Activated CD4-positive, alpha-beta memory T cell treated with anti-CD3 and anti-CD28 coated beads for 36 hours (primary cell): ENCODE measurements at regions of chr11 and their contacts with region 1.

Region 1: DNA sequence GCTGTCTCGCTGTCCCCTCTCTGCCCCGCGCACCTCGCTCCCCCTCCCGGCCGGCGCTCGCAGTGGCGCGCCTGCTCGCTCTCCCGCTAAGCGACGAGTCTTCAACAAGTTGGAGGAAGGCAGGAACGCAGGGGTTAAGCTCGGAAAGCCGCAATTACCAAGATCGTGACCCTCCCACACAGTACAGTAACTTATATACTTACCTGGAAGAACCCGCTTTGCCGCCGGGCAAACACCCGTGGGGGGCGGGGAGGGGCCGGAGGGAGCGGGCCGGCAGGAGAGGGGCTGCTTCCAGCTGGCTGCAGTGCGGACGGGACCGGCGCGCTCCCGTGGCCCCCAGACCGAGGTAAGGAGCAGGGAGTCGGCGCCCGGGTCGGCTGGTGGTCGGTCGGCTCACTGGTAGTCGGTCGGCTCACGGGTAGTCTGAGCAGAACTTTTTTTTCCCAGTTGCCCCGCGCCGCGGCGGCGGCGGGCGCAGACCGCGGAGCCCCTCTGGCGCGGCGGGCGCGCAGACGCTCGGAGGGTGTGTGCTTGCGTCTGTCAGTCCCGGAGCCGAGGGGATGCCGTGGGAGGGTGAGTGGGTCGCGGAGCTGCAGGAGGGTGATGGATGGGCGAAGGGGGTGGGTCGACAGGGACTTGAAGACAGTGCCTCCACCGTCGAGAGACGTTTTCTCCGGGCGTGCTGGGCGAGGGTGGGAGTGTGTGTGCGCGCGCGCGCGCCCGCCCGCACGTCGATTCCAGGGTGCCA is 101.2 kb upstream of the HSD17B12 start:
- DNase-seq: peak; percentile 71
- H3K4me3 Mint-ChIP-seq: peak overlapping the region; percentile 66
- H3K27ac Mint-ChIP-seq: no peak overlapping the region
- H3K4me1 Mint-ChIP-seq: peaks cover 43% of the 10 kb centered on the region
- H3K27me3 Mint-ChIP-seq: peaks cover 85% of the 10 kb centered on the region

Region 2: DNA sequence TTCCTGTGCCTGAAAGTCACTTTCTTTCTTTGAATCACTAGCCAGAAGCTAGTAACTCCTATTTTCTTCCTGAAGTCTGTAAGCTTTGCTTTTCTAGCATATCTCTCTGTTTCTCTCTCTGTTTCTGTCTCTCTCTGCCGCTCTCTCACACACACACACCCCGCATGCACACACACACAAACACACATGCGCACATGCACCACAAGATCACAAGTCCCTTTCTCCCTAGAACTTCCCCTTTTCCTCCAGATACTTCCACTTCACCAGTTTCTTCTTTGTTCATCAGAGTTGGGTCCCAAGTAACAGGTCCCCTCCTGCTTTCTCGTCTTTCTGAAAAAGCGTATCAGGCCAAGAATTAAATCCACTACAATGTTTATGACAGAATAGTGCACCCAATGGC is 47.3 kb before region 1 on chr11:
- CTCF ChIA-PET with region 1: no interaction called
- POLR2A ChIA-PET with region 1: no interaction called
- intact Hi-C with region 1: no loop called
- DNase-seq: no peak
- H3K4me3 Mint-ChIP-seq: no peak overlapping the region
- H3K27ac Mint-ChIP-seq: no peak overlapping the region
- H3K4me1 Mint-ChIP-seq: no peaks in the 10 kb centered on the region
- H3K27me3 Mint-ChIP-seq: peaks cover 10% of the 10 kb centered on the region

Region 3: GRCh38 chr11:43567396-43567975 is 11.9 kb before region 1 on chr11:
- CTCF ChIA-PET with region 1: interaction called, 28 read pairs
- POLR2A ChIA-PET with region 1: no interaction called
- intact Hi-C with region 1: no loop called
- DNase-seq: no peak
- H3K4me3 Mint-ChIP-seq: no peak overlapping the region
- H3K27ac Mint-ChIP-seq: no peak overlapping the region
- H3K4me1 Mint-ChIP-seq: no peaks in the 10 kb centered on the region
- H3K27me3 Mint-ChIP-seq: peaks cover 40% of the 10 kb centered on the region

Region 4: GRCh38 chr11:43643898-43644620 is 64.7 kb after region 1 on chr11:
- CTCF ChIA-PET with region 1: no interaction called
- POLR2A ChIA-PET with region 1: no interaction called
- intact Hi-C with region 1: loop called (anchors 2 kb)
- DNase-seq: peak; percentile 93
- H3K4me3 Mint-ChIP-seq: peak overlapping the region; percentile 97
- H3K27ac Mint-ChIP-seq: peak overlapping the region; percentile 75
- H3K4me1 Mint-ChIP-seq: peaks cover 24% of the 10 kb centered on the region
- H3K27me3 Mint-ChIP-seq: peaks cover 11% of the 10 kb centered on the region

Region 5: DNA sequence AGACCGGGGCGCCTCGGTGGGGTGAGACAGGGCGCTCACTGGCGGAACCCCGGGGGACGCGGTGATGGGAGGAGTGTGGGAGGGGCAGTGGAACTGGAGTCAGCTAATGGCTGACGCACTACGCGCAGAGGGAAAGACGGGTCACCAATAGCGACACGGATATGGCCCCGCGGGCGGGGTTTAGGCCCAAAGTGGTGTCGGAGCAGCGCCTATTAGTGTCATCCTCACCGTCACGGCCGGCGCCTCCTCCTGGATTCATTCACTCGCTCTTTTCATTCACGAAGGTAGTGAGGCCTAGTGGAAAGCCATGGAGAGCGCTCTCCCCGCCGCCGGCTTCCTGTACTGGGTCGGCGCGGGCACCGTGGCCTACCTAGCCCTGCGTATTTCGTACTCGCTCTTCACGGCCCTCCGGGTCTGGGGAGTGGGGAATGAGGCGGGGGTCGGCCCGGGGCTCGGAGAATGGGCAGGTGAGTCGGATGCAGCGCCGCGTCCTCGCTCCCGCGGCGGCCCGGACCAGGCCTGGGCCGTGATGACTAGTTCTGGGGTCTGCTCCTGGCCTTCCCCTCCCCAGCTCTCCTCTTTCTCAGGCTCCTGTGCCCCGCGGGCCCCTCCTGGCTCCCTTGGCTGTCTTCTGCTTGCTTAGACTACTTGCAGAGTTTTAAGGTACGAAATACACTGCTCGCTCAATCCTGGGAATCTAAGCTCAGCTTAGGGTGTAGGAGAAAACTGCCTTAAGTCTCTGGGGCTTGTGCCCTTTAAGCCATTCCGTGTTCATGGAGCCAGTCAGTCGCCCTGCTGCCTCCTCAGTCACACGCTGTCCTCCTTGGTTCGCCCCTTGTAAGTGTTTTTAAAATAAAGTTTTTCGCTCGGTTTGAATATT is 101.4 kb after region 1 on chr11 and contains the start of gene HSD17B12:
- CTCF ChIA-PET with region 1: interaction called, 3 read pairs
- POLR2A ChIA-PET with region 1: interaction called, 4 read pairs
- intact Hi-C with region 1: loop called (anchors 2 kb)
- DNase-seq: peak; percentile 100
- H3K4me3 Mint-ChIP-seq: peak within 1 kb of the TSS; percentile 92
- H3K27ac Mint-ChIP-seq: peak within 1 kb of the TSS; percentile 94
- H3K4me1 Mint-ChIP-seq: peaks cover 33% of the 10 kb centered on the region
- H3K27me3 Mint-ChIP-seq: no peaks in the 10 kb centered on the region
- total RNA-seq, gene HSD17B12: 32.8 to 35.3 TPM

Region 6: GRCh38 chr11:43830928-43831440 is 251.6 kb after region 1 on chr11:
- CTCF ChIA-PET with region 1: no interaction called
- POLR2A ChIA-PET with region 1: no interaction called
- intact Hi-C with region 1: loop called (anchors 5 kb)
- DNase-seq: peak; percentile 74
- H3K4me3 Mint-ChIP-seq: no peak overlapping the region
- H3K27ac Mint-ChIP-seq: peak overlapping the region; percentile 52
- H3K4me1 Mint-ChIP-seq: peaks cover 18% of the 10 kb centered on the region
- H3K27me3 Mint-ChIP-seq: no peaks in the 10 kb centered on the region

Region 7: GRCh38 chr11:43852057-43852636 is 272.8 kb after region 1 on chr11:
- CTCF ChIA-PET with region 1: interaction called, 9 read pairs
- POLR2A ChIA-PET with region 1: no interaction called
- intact Hi-C with region 1: loop called (anchors 2 kb)
- DNase-seq: peak; percentile 73
- H3K4me3 Mint-ChIP-seq: no peak overlapping the region
- H3K27ac Mint-ChIP-seq: no peak overlapping the region
- H3K4me1 Mint-ChIP-seq: no peaks in the 10 kb centered on the region
- H3K27me3 Mint-ChIP-seq: no peaks in the 10 kb centered on the region

Region 8: DNA sequence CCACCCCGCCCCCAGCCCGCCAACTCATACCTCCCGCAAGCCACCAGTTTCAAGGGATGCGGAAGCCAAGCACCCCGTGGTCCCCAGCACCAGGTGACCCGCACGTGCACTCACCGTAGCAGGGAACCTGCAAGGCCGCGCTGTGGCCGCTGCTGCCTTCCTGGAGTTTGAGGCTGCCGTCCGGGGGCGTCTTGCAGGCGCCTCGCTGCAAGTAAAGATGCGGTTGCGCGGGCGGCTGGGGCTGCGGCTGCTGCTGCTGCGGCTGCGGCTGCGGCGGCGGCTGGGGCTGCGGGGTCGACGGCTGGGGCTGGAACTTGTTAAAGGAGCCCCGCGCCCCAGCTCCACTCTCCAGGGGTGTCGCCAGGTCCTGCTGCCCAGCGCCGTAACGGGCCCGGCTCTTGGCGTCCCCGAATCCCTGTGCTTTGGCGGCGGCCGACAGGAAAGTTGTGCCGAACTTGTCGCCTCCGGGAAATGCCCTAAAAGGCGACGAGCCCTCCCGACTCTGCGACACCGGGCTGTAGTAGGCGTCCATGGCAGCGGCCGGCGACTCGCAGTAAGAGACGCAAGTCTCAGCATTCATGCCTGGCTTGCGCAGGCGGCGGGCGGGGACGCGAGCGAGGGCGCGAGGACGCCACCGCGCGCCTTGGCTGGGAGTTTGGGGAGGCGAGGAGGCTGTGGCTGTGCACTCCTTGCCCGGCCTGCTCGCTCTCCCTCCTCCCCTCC is 730.3 kb after region 1 on chr11 and contains the start of gene ALX4:
- CTCF ChIA-PET with region 1: no interaction called
- POLR2A ChIA-PET with region 1: no interaction called
- intact Hi-C with region 1: loop called (anchors 10 kb)
- DNase-seq: peak; percentile 71
- H3K4me3 Mint-ChIP-seq: peak within 1 kb of the TSS; percentile 51
- H3K27ac Mint-ChIP-seq: no peak within 1 kb of the TSS
- H3K4me1 Mint-ChIP-seq: peaks cover 24% of the 10 kb centered on the region
- H3K27me3 Mint-ChIP-seq: peaks cover 80% of the 10 kb centered on the region
- total RNA-seq, gene ALX4: not detected